ENCODE measurements at regions of chr4 and their contacts with region 1.

Region 1: GRCh38 chr4:997375-998071 is 4.3 kb upstream of the SLC26A1 start:
- DNase-seq: no peak
- ATAC-seq: peak; percentile 23 to 48 (median 40)
- H3K4me3 ChIP-seq: peak overlapping the region; percentile 52
- H3K27ac ChIP-seq: no peak overlapping the region
- H3K4me1 ChIP-seq: peaks cover 11% of the 10 kb centered on the region
- H3K27me3 ChIP-seq: peaks cover 0 to 65% (median 36%) of the 10 kb centered on the region in 3 donors
- CTCF ChIP-seq: no peak

Region 2: GRCh38 chr4:683982-684622 is 313.4 kb before region 1 on chr4:
- intact Hi-C with region 1: no loop called
- DNase-seq: peak; percentile 68 to 84
- ATAC-seq: peak; percentile 16 to 39 (median 34)
- H3K4me3 ChIP-seq: no peak overlapping the region
- H3K27ac ChIP-seq: no peak overlapping the region
- H3K4me1 ChIP-seq: peaks cover 24% of the 10 kb centered on the region
- H3K27me3 ChIP-seq: peaks cover 0 to 3% (median 0%) of the 10 kb centered on the region in 3 donors
- CTCF ChIP-seq: peak; percentile 53

Region 3: GRCh38 chr4:732911-733630 is 264.5 kb before region 1 on chr4:
- intact Hi-C with region 1: loop called in 1 of 2 experiments (anchors 10 kb)
- DNase-seq: peak in 1 of 2 donors; percentile 49
- ATAC-seq: peak in 3 of 4 donors; percentile 40 to 52 (median 45)
- H3K4me3 ChIP-seq: no peak overlapping the region
- H3K27ac ChIP-seq: no peak overlapping the region
- H3K4me1 ChIP-seq: no peaks in the 10 kb centered on the region
- H3K27me3 ChIP-seq: no peaks in the 10 kb centered on the region
- CTCF ChIP-seq: no peak

Region 4: DNA sequence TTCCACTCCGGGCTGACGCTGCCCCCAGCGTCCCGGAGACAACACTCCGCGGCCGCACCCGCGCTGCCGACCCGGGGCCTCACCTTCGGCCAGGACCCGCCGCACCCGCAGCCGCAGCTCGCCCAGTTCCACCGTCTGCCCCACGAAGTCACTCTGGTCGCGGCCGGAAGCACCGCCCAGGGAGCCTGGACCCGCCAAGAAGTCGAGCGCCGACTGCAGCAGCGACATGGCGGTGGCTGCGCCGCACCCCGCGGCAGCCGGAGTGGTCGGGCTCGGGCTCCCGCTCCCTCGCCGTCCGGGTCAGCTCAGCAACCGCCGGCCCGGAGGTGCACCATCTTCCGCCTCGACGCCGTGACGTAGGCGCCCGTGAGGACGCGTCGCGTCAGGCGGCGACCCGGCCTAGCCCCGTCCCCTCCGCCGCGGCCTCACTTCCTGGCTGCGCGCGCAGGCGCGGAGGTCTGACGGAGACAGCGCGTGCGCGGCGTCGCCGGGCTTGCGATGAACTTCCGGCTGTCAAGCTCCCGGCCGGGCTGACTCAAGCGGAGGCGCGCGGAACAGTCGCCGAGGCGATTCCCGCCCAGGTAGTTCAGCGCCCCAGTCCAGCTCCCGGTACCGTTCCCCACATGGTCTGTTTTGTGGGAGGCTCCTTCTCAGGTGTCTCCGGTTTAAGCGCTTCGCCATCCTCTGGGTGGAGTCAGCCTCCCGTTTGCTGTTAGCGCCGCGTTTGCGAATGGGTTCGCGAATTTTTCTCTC is 65.4 kb before region 1 on chr4 and contains the starts of genes GAK and TMEM175:
- intact Hi-C with region 1: no loop called
- DNase-seq: peak; percentile 96 to 98
- ATAC-seq: peak; percentile 96 to 99 (median 97)
- H3K4me3 ChIP-seq: peak within 1 kb of the TSS; percentile 99
- H3K27ac ChIP-seq: peak within 1 kb of the TSS; percentile 99
- H3K4me1 ChIP-seq: peaks cover 30% of the 10 kb centered on the region
- H3K27me3 ChIP-seq: no peaks in the 10 kb centered on the region
- CTCF ChIP-seq: no peak
- total RNA-seq, gene GAK: 20.9 to 46.7 (median 29.9) TPM
- total RNA-seq, gene TMEM175: 11.7 to 15.3 (median 14.7) TPM